ENCODE measurements at regions of chr7 and their contacts with region 1.

Region 1: DNA sequence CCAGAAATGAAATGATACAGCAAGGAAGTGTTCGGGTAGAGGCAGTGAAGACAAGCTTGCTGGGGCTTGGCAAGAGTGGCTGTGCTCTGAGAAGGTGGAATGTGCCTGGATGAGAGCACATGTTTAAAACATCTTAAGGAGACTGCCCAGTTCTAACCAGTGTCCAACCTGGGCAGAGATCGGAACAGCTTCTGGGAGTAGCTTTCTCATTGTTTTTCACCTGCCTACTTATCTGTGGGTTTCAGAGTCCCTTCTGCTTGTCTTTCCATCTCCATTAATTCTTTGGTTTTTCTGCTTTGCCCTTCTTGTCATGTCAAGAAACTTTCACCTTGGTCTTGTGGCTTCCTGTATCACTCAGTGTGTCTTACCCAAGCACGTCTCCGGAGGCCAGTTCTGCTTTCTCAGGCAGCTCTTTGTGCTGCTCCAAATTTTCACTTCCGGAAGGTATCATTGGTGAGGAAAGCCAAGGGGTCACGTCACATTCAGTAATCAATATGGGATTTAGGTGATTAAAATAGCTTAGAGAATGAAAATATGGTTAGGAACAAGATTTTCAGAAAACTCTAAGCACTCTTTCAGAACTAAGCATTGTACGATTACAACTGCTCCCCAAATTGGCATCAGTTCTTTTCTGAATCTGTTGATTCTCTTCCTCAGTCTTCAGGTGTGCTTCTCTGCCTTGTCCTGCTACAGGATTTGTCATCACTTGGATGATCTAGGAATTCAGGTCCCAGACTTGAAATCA is 5.5 kb upstream of the LAMB4 start:
- DNase-seq: no peak
- H3K4me3 ChIP-seq: no peak overlapping the region
- H3K27ac ChIP-seq: no peak overlapping the region
- H3K4me1 ChIP-seq: no peaks in the 10 kb centered on the region
- H3K27me3 ChIP-seq: no peaks in the 10 kb centered on the region
- CTCF ChIP-seq: no peak

Region 2: DNA sequence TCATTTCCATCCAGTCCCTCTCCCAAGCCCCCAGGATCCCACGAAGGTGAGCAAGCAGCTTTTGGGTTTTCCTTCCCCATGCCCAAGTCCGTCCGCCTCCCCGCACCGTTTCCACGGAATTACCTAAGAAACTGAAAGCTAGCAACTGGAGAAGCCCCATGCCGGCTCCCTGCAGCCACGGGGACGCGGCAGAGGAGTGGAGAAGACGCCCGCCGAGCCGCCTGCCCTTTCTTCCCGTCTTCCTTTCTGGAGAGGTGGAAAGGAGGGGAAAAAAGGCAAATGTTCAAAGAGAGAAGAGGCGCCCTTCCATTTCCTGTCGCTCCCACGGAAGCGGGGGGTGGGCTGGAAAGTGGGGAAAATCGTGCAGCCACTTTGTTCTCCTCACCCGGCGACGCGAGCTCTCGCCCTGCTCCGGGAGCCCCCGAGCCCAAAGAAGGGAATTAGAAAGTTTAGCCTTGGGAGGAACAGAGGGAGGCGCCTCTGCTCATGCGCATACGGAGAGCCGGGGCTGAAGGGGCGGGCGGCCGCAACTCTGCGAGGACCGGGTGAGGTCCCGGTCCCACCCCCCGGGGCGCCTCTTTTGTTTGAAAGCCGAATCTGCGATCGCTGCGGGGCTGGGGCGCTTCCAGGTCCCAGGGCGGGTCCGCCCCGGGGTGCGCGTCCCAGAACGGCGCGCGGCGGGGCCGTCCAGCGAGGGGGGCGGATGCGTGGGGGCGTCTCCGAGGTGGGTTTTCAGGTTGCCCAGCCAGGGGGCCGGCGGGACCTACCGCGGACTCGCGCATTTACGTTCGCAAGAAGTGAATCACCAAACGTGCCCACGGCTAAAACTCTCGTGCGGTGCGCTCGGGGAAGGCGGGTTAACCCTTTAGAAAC is 132.7 kb before region 1 on chr7 and contains the start of gene LAMB1:
- CTCF ChIA-PET with region 1: interaction called, 11 read pairs
- POLR2A ChIA-PET with region 1: no interaction called
- intact Hi-C with region 1: no loop called
- DNase-seq: peak; percentile 59 to 89
- H3K4me3 ChIP-seq: peak within 1 kb of the TSS; percentile 64
- H3K27ac ChIP-seq: no peak within 1 kb of the TSS
- H3K4me1 ChIP-seq: peaks cover 41% of the 10 kb centered on the region
- H3K27me3 ChIP-seq: no peaks in the 10 kb centered on the region
- CTCF ChIP-seq: no peak
- total RNA-seq, gene LAMB1: 236 and 242 TPM in 2 replicates

Measured in PC-9 (cell line).